ENCODE measurements at regions of chr2 and their contacts with region 1.

Region 1: GRCh38 chr2:163735685-163736432 is at the start of gene FIGN:
- DNase-seq: peak; percentile 75
- ATAC-seq: peak; percentile 95
- H3K4me3 ChIP-seq: peak within 1 kb of the TSS; percentile 87 to 100 (median 91)
- H3K27ac ChIP-seq: peak within 1 kb of the TSS; percentile 89
- H3K4me1 ChIP-seq: peaks cover 45% of the 10 kb centered on the region
- H3K27me3 ChIP-seq: peaks cover 0 to 4% of the 10 kb centered on the region in 2 experiments; a peak in 2 of 5 replicates
- CTCF ChIP-seq: no peak
- EP300 ChIP-seq: peak in 1 of 2 experiments; percentile 3; a peak in 1 of 4 replicates
- POLR2A ChIP-seq: peak; percentile 87 to 90
- RAD21 ChIP-seq: no peak
- total RNA-seq, gene FIGN: 6.6 and 11.6 TPM in 2 replicates

Region 2: DNA sequence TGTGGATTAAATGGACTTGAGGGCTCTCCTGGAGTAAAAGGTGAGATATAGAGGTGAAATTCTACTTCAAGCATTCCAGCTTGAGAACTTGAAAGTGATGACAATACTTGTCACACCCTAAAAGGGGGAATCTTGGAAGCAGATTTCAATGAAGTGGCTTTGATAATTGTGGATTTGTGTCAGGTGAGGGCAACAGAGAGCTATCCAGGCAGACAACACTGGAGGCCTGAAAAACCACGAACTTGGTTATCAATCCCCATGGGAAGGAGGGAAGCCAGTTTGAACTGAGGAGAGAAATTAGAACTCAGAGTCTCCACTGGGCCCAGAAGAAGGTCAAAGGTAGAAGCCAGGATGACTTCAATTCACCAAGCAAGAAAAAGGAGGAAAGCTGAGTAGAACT is 263.9 kb before region 1 on chr2:
- CTCF ChIA-PET with region 1: no interaction called
- POLR2A ChIA-PET with region 1: no interaction called
- in situ Hi-C with region 1: no loop called
- intact Hi-C with region 1: loop called (anchors 2 kb)
- DNase-seq: peak; percentile 3
- ATAC-seq: peak; percentile 50
- H3K4me3 ChIP-seq: no peak overlapping the region
- H3K27ac ChIP-seq: no peak overlapping the region
- H3K4me1 ChIP-seq: peaks cover 16% of the 10 kb centered on the region; the same call in 1 of the 2 replicates
- H3K27me3 ChIP-seq: no peaks in the 10 kb centered on the region
- CTCF ChIP-seq: peak; percentile 59
- EP300 ChIP-seq: no peak
- POLR2A ChIP-seq: no peak
- RAD21 ChIP-seq: 0 out of 2 replicates have a peak, but pooled peaks have one; percentile 11

Region 3: GRCh38 chr2:163595028-163595427 is 140.8 kb before region 1 on chr2:
- CTCF ChIA-PET with region 1: no interaction called
- POLR2A ChIA-PET with region 1: no interaction called
- in situ Hi-C with region 1: no loop called
- intact Hi-C with region 1: loop called (anchors 5 kb)
- DNase-seq: no peak
- ATAC-seq: no peak
- H3K4me3 ChIP-seq: no peak overlapping the region
- H3K27ac ChIP-seq: no peak overlapping the region
- H3K4me1 ChIP-seq: no peaks in the 10 kb centered on the region
- H3K27me3 ChIP-seq: no peaks in the 10 kb centered on the region
- CTCF ChIP-seq: no peak
- EP300 ChIP-seq: no peak
- POLR2A ChIP-seq: no peak
- RAD21 ChIP-seq: no peak

Region 4: DNA sequence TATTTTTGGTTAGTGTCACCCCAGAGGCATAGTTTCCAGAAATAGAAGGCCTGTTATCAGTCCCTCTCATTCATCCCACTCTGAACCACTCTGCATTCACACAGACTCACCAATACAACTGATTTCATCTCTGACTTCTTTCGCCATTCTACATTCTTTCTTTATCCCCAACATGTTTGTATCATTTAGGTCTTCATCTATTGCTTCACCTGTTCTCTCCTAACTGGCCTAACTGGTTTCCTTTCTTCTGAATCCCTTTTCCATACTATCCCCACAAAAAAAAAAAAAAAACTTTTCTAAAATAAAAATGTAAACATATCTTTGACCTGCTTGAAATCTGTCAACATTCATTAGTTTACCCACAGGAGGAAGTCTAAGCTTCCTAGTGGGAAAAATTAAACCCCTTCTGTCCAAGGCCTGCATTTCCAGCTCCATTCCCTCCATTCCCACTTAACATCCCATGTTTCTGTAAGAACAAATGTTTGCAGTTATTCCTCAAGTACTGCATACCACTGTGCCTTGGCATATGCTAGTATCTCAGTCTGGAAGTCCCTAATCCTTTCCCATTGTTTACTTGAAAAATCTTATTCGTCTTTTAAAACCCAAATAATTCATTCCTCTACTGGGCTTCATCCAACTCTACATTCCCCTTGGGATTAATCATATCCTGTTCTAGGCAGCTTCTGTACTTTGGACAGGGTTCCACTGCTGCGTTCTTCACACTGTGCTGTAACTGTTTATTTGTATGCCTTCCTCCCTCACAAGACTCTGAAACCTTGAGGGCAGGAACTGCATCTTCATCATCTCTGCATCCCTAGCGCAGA is 68.6 kb before region 1 on chr2:
- CTCF ChIA-PET with region 1: no interaction called
- POLR2A ChIA-PET with region 1: interaction called, 6 read pairs
- in situ Hi-C with region 1: no loop called
- intact Hi-C with region 1: loop called (anchors 1 kb)
- DNase-seq: peak; percentile 81
- ATAC-seq: peak; percentile 89
- H3K4me3 ChIP-seq: no peak overlapping the region; a peak in 1 of 6 replicates
- H3K27ac ChIP-seq: peak overlapping the region; percentile 66
- H3K4me1 ChIP-seq: peaks cover 43% of the 10 kb centered on the region
- H3K27me3 ChIP-seq: no peaks in the 10 kb centered on the region
- CTCF ChIP-seq: no peak
- EP300 ChIP-seq: peak in 1 of 2 experiments; percentile 72; a peak in 2 of 4 replicates
- POLR2A ChIP-seq: no peak
- RAD21 ChIP-seq: no peak

Region 5: GRCh38 chr2:163943403-163944346 is 207.8 kb after region 1 on chr2:
- CTCF ChIA-PET with region 1: no interaction called
- POLR2A ChIA-PET with region 1: no interaction called
- in situ Hi-C with region 1: no loop called
- intact Hi-C with region 1: loop called (anchors 5 kb)
- DNase-seq: peak; percentile 96
- ATAC-seq: peak; percentile 99
- H3K4me3 ChIP-seq: peak overlapping the region in 1 of 3 experiments; percentile 8; a peak in 3 of 6 replicates
- H3K27ac ChIP-seq: peak overlapping the region; percentile 51
- H3K4me1 ChIP-seq: peaks cover 29% of the 10 kb centered on the region
- H3K27me3 ChIP-seq: no peaks in the 10 kb centered on the region
- CTCF ChIP-seq: no peak
- EP300 ChIP-seq: peak in 1 of 2 experiments; percentile 72; a peak in 2 of 4 replicates
- POLR2A ChIP-seq: no peak
- RAD21 ChIP-seq: no peak